PC-3 (cell line): ENCODE measurements at regions of chr9 and their contacts with region 1.

Region 1: DNA sequence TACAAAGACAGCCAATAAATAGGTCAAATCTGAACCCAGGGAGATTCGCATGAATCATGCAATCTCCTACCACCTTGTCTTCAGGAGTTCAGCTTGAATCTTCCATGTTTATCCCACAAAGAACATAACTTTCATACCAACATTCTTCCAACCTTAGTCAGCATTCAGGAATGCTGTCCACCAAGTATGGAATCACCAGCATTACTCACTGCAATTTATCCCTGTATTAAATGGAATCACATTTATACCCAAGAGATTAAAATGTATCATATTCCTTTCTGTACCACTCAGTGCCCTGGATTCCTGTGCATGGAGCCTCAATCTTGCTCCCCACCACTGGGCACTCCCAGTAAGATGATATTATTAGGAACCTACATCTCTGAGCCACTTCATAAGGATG is 162.6 kb downstream of the GLIS3 start:
- DNase-seq: peak; percentile 96
- ATAC-seq: peak; percentile 85
- H3K4me3 ChIP-seq: peak overlapping the region; percentile 58
- H3K27ac ChIP-seq: peak overlapping the region; percentile 99
- H3K4me1 ChIP-seq: peaks cover 40% of the 10 kb centered on the region
- H3K27me3 ChIP-seq: no peaks in the 10 kb centered on the region
- CTCF ChIP-seq: no peak

Region 2: DNA sequence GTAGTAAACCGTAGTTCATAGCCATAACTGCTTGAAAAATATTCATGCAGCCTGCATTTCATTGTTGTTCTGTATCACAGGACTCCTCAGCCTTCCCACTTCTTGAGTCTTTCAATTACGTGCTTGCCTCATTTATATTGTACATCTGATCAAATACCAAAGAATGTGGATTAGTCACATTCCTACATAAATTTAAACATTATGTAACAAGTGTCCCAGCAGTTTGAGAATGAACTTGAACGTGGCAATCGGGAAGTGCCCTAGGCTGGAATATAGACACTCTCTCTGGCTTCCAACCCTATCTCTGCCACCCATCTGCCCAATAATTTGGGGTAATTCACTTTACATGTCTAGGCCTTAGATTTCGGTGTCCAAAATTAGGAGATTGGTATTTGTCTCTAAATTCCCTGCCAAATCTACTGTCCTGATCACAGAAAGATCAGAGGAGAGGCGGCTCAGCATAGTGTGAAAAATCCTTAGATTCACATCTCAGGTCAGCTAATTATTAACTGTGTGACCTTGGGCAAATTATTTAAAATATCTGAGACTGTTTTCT is 396.4 kb before region 1 on chr9:
- CTCF ChIA-PET with region 1: no interaction called
- POLR2A ChIA-PET with region 1: no interaction called
- intact Hi-C with region 1: loop called (anchors 5 kb)
- DNase-seq: peak; percentile 79
- ATAC-seq: peak; percentile 84
- H3K4me3 ChIP-seq: peak overlapping the region; percentile 24
- H3K27ac ChIP-seq: peak overlapping the region; percentile 80
- H3K4me1 ChIP-seq: peaks cover 35% of the 10 kb centered on the region
- H3K27me3 ChIP-seq: no peaks in the 10 kb centered on the region
- CTCF ChIP-seq: no peak

Region 3: DNA sequence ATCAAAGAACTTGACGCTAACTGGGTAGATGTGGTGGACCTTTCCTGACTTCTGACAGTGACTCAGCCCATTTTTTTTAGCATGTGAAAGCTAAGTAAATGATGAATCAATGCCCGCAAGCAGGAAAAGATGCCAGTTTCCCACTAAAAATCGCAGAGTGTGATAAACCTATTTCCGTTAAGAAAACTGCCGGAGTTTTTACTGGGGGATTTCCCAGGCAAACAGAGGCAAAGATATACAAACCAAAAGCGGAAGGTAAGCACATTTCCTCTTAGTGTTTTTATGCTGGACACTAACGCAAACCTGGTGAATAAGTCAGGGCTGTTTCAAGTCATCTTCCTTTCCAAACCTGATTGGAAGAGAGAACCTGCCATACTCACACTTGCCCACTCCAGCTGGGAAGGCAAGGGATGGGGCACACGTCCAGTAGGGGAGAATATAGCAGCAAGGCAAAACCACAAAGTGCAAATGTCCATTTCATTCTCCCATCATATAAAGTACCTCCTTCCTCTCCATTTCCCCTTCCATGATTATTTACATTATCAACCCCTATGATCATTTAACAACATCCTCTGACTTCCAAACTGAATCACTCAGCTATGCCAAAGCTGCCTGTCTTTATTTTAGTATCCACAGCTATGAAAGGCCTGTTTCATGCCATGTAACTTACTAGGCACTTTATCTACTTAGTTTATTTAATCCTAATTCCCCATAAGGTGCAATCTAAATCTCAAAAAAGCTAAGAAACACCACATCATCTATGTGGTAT is 261.7 kb before region 1 on chr9:
- CTCF ChIA-PET with region 1: no interaction called
- POLR2A ChIA-PET with region 1: no interaction called
- intact Hi-C with region 1: loop called (anchors 2 kb)
- DNase-seq: peak; percentile 97
- ATAC-seq: peak; percentile 76
- H3K4me3 ChIP-seq: peak overlapping the region; percentile 10; the same call in 1 of the 2 replicates
- H3K27ac ChIP-seq: peak overlapping the region; percentile 99
- H3K4me1 ChIP-seq: peaks cover 35% of the 10 kb centered on the region
- H3K27me3 ChIP-seq: no peaks in the 10 kb centered on the region
- CTCF ChIP-seq: no peak

Region 4: GRCh38 chr9:3962971-3963642 is 174.1 kb before region 1 on chr9:
- CTCF ChIA-PET with region 1: no interaction called
- POLR2A ChIA-PET with region 1: no interaction called
- intact Hi-C with region 1: loop called (anchors 5 kb)
- DNase-seq: peak; percentile 90
- ATAC-seq: peak; percentile 88
- H3K4me3 ChIP-seq: peak overlapping the region; percentile 23; the same call in 1 of the 2 replicates
- H3K27ac ChIP-seq: peak overlapping the region; percentile 97
- H3K4me1 ChIP-seq: peaks cover 39% of the 10 kb centered on the region
- H3K27me3 ChIP-seq: no peaks in the 10 kb centered on the region
- CTCF ChIP-seq: no peak

Region 5: DNA sequence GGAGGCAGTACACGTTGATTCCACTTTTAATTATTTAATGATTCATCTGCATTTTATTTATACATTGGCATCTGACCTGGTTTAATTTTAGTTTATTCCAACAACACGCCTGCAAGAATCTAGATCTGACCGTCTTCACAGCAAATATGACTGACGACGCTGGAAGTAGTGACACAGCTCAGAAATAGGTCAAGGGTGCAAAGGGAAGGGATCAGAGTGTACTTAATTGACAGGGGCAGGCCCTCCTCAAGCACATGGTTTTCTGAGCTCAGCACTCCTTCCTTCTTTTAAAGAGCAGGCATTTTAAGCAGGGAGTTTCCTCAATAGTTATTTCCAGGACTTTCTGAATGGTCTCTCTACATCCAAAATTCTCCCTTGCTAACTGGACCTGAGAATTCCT is 37.5 kb after region 1 on chr9:
- CTCF ChIA-PET with region 1: no interaction called
- POLR2A ChIA-PET with region 1: no interaction called
- intact Hi-C with region 1: loop called (anchors 5 kb)
- DNase-seq: peak; percentile 54
- ATAC-seq: peak; percentile 90
- H3K4me3 ChIP-seq: peak overlapping the region; percentile 35; the same call in 1 of the 2 replicates
- H3K27ac ChIP-seq: peak overlapping the region; percentile 74
- H3K4me1 ChIP-seq: peaks cover 20% of the 10 kb centered on the region
- H3K27me3 ChIP-seq: no peaks in the 10 kb centered on the region
- CTCF ChIP-seq: no peak